ENCODE measurements at regions of chr6 and their contacts with region 1.

Region 1: DNA sequence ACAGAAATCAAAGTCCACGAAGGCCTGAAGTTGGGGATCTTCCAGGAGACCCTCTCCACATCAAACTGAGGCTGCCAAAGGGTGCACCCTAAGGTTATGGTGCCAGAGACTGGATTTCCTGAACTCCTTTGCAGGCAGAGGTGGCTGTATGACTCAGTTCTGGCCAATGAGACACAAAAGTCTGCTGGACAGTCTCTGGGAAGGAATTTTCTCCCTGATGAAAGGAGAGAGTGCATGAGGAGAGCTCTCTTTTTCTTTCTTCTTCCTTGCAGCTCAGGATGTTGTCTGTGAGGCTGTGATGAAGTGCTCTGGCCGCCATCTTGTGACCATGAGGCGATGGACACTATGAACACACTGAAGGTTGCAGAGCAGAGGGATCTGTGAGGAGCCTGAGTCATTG is 85.2 kb downstream of the MDGA1 start:
- DNase-seq: no peak
- H3K4me3 ChIP-seq: no peak overlapping the region
- H3K4me3 Mint-ChIP-seq: no peak overlapping the region
- H3K27ac ChIP-seq: no peak overlapping the region
- H3K27ac Mint-ChIP-seq: no peak overlapping the region
- H3K4me1 ChIP-seq: no peaks in the 10 kb centered on the region
- H3K4me1 Mint-ChIP-seq: no peaks in the 10 kb centered on the region
- H3K27me3 ChIP-seq: peaks cover 0 to 2% of the 10 kb centered on the region in 2 donors
- H3K27me3 Mint-ChIP-seq: peaks cover 12 to 28% (median 15%) of the 10 kb centered on the region in 3 donors
- CTCF ChIP-seq: no peak

Region 2: GRCh38 chr6:37556881-37557644 is 55.4 kb before region 1 on chr6:
- intact Hi-C with region 1: no loop called
- DNase-seq: no peak
- H3K4me3 ChIP-seq: no peak overlapping the region
- H3K4me3 Mint-ChIP-seq: no peak overlapping the region
- H3K27ac ChIP-seq: no peak overlapping the region
- H3K27ac Mint-ChIP-seq: no peak overlapping the region
- H3K4me1 ChIP-seq: no peaks in the 10 kb centered on the region
- H3K4me1 Mint-ChIP-seq: peaks cover 3% of the 10 kb centered on the region
- H3K27me3 ChIP-seq: peaks cover 0 to 13% of the 10 kb centered on the region in 2 donors
- H3K27me3 Mint-ChIP-seq: peaks cover 17 to 30% (median 27%) of the 10 kb centered on the region in 3 donors
- CTCF ChIP-seq: no peak

Region 3: GRCh38 chr6:37648465-37649330 is 36.2 kb after region 1 on chr6:
- intact Hi-C with region 1: loop called in 1 of 2 experiments (anchors 5 kb)
- DNase-seq: no peak
- H3K4me3 ChIP-seq: no peak overlapping the region
- H3K4me3 Mint-ChIP-seq: peak overlapping the region in 1 of 2 donors; percentile 81
- H3K27ac ChIP-seq: no peak overlapping the region
- H3K27ac Mint-ChIP-seq: no peak overlapping the region
- H3K4me1 ChIP-seq: peaks cover 5 to 8% of the 10 kb centered on the region in 2 donors
- H3K4me1 Mint-ChIP-seq: peaks cover 16% of the 10 kb centered on the region
- H3K27me3 ChIP-seq: peaks cover 26 to 39% of the 10 kb centered on the region in 2 donors
- H3K27me3 Mint-ChIP-seq: peaks cover 34 to 71% (median 45%) of the 10 kb centered on the region in 3 donors
- CTCF ChIP-seq: no peak